ENCODE measurements at regions of chr7 and their contacts with region 1.

Region 1: GRCh38 chr7:116679500-116679899 is 7.5 kb downstream of the MET start:
- DNase-seq: no peak
- ATAC-seq: peak; percentile 99
- H3K4me3 Mint-ChIP-seq: no peak overlapping the region
- H3K27ac Mint-ChIP-seq: no peak overlapping the region
- H3K4me1 Mint-ChIP-seq: peaks cover 8% of the 10 kb centered on the region
- H3K27me3 Mint-ChIP-seq: peaks cover 33% of the 10 kb centered on the region

Region 2: GRCh38 chr7:116399819-116400218 is 279.7 kb before region 1 on chr7:
- CTCF ChIA-PET with region 1: no interaction called
- POLR2A ChIA-PET with region 1: no interaction called
- intact Hi-C with region 1: no loop called
- DNase-seq: no peak
- ATAC-seq: no peak
- H3K4me3 Mint-ChIP-seq: no peak overlapping the region
- H3K27ac Mint-ChIP-seq: no peak overlapping the region
- H3K4me1 Mint-ChIP-seq: no peaks in the 10 kb centered on the region
- H3K27me3 Mint-ChIP-seq: peaks cover 16% of the 10 kb centered on the region

Region 3: DNA sequence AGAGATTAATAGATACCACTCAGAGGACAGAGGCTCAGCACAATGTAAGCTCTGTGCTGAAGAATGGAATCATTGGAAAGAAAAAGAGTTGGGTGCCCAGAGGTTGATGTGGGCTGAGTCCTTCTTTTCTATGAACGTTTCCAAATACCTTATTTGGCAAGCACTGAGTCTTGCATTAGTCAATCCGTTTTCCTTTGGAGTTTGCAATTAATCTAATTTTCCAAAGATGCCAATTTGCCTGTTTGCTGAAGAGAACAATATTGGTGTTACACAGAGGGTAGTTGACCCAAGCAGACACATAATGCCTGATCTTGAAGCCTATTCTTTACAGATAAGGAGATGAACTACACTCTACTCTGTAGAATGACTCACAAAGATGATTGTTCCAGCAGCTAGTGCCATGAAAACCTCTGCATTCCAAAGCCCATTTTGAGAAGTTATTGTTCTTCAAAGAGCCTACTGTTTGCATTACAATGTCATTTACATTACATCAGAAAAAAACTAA is 62.9 kb before region 1 on chr7:
- CTCF ChIA-PET with region 1: no interaction called
- POLR2A ChIA-PET with region 1: no interaction called
- intact Hi-C with region 1: no loop called
- DNase-seq: no peak
- ATAC-seq: no peak
- H3K4me3 Mint-ChIP-seq: no peak overlapping the region
- H3K27ac Mint-ChIP-seq: no peak overlapping the region
- H3K4me1 Mint-ChIP-seq: no peaks in the 10 kb centered on the region
- H3K27me3 Mint-ChIP-seq: peaks cover 14% of the 10 kb centered on the region

Region 4: DNA sequence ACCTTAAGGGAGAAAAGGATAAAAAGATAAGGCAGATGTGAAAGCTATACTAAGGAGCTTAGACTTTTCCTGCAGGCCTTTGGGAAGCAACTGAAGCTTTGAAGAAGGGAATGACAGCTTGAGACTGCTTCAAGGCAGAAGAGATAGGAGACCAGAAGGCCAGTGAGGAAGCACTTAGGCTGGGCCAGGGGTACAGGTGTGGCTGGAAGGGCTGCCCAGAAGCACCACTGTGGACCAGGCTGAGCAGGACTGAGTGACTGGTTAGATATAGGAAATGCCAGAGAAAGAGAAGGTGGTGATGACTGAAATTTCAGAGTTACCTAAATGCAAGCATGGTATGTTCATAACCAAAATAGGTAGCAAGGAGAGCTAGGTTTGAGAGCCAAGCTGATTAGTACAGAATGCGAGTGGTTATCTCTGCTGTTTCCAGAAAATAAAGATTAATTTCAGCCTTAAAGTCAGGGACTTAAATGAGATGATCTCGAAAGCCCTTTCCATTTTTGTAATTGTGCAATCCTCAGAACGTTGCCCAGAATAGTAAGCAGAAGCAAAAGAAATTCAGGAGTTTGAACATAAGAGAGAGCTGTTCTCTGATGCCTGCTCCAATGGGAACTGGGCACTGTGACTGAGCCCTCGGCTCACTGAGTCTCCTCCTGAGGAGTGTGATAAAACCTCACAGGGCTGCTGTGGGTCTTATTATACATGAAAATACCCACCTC is 47.4 kb after region 1 on chr7:
- CTCF ChIA-PET with region 1: no interaction called
- POLR2A ChIA-PET with region 1: no interaction called
- intact Hi-C with region 1: no loop called
- DNase-seq: no peak
- ATAC-seq: no peak
- H3K4me3 Mint-ChIP-seq: no peak overlapping the region
- H3K27ac Mint-ChIP-seq: no peak overlapping the region
- H3K4me1 Mint-ChIP-seq: no peaks in the 10 kb centered on the region
- H3K27me3 Mint-ChIP-seq: peaks cover 9% of the 10 kb centered on the region

Region 5: DNA sequence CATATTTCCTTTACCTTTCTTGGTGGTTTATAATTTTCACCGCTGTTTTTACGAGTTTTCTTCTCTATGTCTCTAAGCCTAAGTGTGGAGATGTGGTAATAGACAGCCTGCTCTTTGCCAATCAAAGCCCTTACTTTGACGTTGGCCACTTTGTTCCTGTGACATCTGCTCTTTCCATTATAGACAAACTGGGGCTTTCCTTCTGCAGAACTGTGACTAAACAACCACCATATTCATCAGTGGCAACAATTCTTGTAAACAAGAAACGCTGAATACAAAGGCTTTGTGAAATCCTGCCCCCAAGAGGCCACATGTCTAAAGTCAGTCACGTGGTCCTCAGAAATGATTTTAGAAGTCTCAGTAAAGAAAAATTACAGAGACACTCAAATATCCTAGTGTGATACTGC is 123.2 kb after region 1 on chr7:
- CTCF ChIA-PET with region 1: no interaction called
- POLR2A ChIA-PET with region 1: no interaction called
- intact Hi-C with region 1: loop called in 1 of 2 experiments (anchors 2 kb)
- DNase-seq: peak; percentile 59
- ATAC-seq: peak; percentile 92
- H3K4me3 Mint-ChIP-seq: no peak overlapping the region
- H3K27ac Mint-ChIP-seq: no peak overlapping the region
- H3K4me1 Mint-ChIP-seq: peaks cover 16% of the 10 kb centered on the region
- H3K27me3 Mint-ChIP-seq: peaks cover 5% of the 10 kb centered on the region